ENCODE measurements at regions of chr17 and their contacts with region 1.

Region 1: GRCh38 chr17:76466775-76467130 is 650 bp upstream of the AANAT start:
- DNase-seq: no peak
- H3K4me3 Mint-ChIP-seq: no peak overlapping the region
- H3K27ac Mint-ChIP-seq: no peak overlapping the region
- H3K4me1 Mint-ChIP-seq: peaks cover 4% of the 10 kb centered on the region
- H3K27me3 Mint-ChIP-seq: peaks cover 2% of the 10 kb centered on the region

Region 2: GRCh38 chr17:76506408-76507349 is 39.9 kb after region 1 on chr17:
- intact Hi-C with region 1: loop called (anchors 1 kb)
- DNase-seq: peak; percentile 97
- H3K4me3 Mint-ChIP-seq: no peak overlapping the region
- H3K27ac Mint-ChIP-seq: peak overlapping the region; percentile 70
- H3K4me1 Mint-ChIP-seq: peaks cover 35% of the 10 kb centered on the region
- H3K27me3 Mint-ChIP-seq: peaks cover 2% of the 10 kb centered on the region

Region 3: DNA sequence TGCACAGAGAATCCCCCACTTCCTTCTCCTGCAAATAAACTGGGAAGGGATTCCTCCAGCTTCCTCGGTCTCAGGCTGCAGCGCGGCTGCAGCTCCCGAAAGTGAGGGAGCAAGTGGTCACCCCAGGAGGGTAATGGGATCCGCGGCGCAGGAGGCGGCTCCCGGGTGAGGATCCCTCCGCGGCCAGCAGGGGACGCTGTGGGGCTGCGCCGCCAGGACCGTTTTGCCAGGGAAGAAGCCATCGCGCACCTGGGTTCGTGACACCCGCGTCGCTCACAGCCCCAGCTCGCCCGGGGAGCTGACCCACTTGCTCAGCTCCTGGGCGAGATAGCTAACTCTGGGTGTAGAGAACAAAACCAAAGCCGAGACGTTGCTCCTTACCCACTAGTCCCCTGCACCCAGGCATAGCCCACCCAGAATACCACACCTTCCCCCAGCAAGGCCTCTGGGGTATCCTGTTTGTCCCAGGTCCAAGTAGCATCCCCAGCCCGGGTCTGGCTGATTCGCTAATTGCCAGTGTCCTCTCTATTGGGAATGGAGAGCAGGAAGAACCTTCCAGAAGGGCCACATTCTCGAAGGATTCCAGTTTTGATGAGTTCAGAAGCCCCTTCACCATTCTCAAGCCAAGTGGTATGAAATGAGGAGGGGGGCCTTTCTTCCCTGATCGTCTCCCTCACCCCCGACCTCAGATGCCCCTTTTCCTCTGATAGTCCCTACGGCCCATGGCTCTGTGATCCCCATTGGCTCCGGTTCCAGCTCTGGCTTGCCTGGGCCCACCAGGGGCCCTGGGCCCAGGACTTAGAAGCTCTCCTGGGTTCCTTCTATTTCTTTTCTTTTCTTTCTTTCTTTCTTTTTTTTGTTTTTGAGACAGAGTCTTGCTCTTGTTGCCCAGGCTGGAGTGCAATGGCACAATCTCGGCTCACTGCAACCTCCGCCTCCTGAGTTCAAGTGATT is 56.6 kb after region 1 on chr17:
- intact Hi-C with region 1: no loop called
- DNase-seq: peak; percentile 95
- H3K4me3 Mint-ChIP-seq: peak overlapping the region; percentile 41
- H3K27ac Mint-ChIP-seq: peak overlapping the region; percentile 67
- H3K4me1 Mint-ChIP-seq: peaks cover 20% of the 10 kb centered on the region
- H3K27me3 Mint-ChIP-seq: peaks cover 6% of the 10 kb centered on the region

Region 4: DNA sequence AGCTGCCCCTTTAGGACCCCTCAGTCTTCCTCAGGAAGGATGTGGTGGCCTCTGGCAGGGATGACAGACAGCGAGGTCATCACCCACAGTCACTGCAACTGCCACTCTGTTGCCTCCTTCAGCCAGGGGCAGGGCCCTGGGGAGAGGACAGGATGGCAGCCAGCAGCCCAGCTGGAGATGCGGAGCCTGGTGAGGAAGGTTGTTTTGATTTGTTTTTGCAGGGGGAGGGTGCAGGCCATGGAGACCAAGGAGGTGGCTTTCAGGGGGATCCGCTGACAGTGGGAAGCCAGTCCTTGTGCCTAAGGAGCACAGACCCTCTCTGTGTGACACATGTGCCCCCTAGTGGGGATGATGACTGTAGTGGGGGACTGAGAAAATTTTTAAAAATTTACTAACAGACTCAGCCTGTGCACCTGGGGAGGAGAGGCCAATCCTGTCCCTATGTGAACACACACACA is 80.5 kb after region 1 on chr17:
- intact Hi-C with region 1: loop called (anchors 1 kb)
- DNase-seq: peak; percentile 88
- H3K4me3 Mint-ChIP-seq: no peak overlapping the region
- H3K27ac Mint-ChIP-seq: no peak overlapping the region
- H3K4me1 Mint-ChIP-seq: peaks cover 6% of the 10 kb centered on the region
- H3K27me3 Mint-ChIP-seq: peaks cover 12% of the 10 kb centered on the region

Measured in activated CD4-positive, alpha-beta T cell treated with anti-CD3 and anti-CD28 coated beads, Interleukin-2, amount 10 ng/mL, durations not matched to agents 24 days and 14 days (primary cell).